Heart right ventricle (tissue), 16 donors: ENCODE measurements at regions of chr2 and their contacts with region 1.

Region 1: DNA sequence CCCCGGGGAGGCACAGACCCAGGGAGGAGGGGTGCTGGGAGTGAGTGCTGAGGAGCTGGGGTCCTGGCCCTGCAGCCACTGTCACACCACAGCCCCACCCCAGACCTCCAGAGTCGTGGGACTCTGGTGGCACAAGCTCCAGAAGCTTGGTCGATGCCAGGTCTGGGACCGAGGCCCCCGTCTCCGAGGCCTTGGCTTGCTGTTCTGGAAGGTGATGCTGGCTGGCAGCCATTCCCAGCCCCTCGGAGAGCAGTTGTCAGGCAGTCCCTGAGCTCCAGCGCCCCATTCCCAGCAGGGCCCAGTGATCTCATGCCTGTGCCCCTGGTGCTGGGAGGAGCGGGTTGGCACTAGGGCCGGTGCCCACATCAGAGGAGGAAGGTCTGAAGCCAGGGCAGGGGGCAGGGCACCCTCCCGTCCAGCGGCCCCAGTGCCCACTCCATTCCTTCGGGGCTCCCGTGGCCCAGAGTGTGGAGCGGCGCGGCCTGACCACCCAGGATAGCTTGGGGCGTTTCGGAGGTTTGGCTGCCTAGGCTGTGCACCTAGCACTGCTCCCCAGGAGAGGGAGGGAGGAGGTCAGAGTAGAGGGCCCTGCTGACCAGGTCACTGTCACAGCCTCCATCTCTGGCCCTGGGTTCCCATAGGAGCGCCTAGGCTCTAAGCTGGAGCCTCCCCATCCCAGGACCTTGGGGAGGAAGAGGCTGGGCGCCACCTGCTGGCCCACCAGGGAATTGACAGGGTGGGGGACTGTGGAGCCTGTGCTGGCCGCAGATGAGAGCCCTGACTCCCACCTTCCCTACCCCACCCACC is 16.8 kb upstream of the ALPI start:
- DNase-seq: no peak
- ATAC-seq: peak in 7 of 8 donors; percentile 34 to 67 (median 51)
- H3K4me3 ChIP-seq: no peak overlapping the region
- H3K27ac ChIP-seq: no peak overlapping the region
- H3K4me1 ChIP-seq: peaks cover 0 to 11% (median 0%) of the 10 kb centered on the region in 9 donors
- H3K27me3 ChIP-seq: peaks cover 0 to 12% (median 4%) of the 10 kb centered on the region in 7 donors
- CTCF ChIP-seq: peak; percentile 25 to 68 (median 59)

Region 2: GRCh38 chr2:231907787-231908186 is 531.4 kb before region 1 on chr2:
- intact Hi-C with region 1: loop called in 9 of 10 experiments (anchors 1 to 5 kb)
- DNase-seq: no peak
- ATAC-seq: no peak
- H3K4me3 ChIP-seq: no peak overlapping the region
- H3K27ac ChIP-seq: no peak overlapping the region
- H3K4me1 ChIP-seq: no peaks in the 10 kb centered on the region
- H3K27me3 ChIP-seq: peaks cover 0 to 10% (median 4%) of the 10 kb centered on the region in 7 donors
- CTCF ChIP-seq: no peak

Region 3: GRCh38 chr2:231925303-231926179 is 513.6 kb before region 1 on chr2:
- intact Hi-C with region 1: loop called in 1 of 10 experiments (anchors 5 kb)
- DNase-seq: peak; percentile 84 to 87
- ATAC-seq: peak; percentile 80 to 95 (median 90)
- H3K4me3 ChIP-seq: peak overlapping the region; percentile 30 to 59 (median 54)
- H3K27ac ChIP-seq: peak overlapping the region in 1 of 10 donors; percentile 15
- H3K4me1 ChIP-seq: peaks cover 8 to 38% (median 23%) of the 10 kb centered on the region in 9 donors
- H3K27me3 ChIP-seq: peaks cover 14 to 94% (median 80%) of the 10 kb centered on the region in 7 donors
- CTCF ChIP-seq: peak; percentile 85 to 97 (median 94)

Region 4: GRCh38 chr2:232075080-232075479 is 364.1 kb before region 1 on chr2:
- intact Hi-C with region 1: no loop called
- DNase-seq: no peak
- ATAC-seq: peak in 1 of 8 donors; percentile 88
- H3K4me3 ChIP-seq: no peak overlapping the region
- H3K27ac ChIP-seq: no peak overlapping the region
- H3K4me1 ChIP-seq: peaks cover 0 to 25% (median 15%) of the 10 kb centered on the region in 9 donors
- H3K27me3 ChIP-seq: no peaks in the 10 kb centered on the region
- CTCF ChIP-seq: no peak

Region 5: GRCh38 chr2:232333361-232334270 is 105.5 kb before region 1 on chr2:
- intact Hi-C with region 1: loop called in 2 of 10 experiments (anchors 10 kb)
- DNase-seq: no peak
- ATAC-seq: no peak
- H3K4me3 ChIP-seq: no peak overlapping the region
- H3K27ac ChIP-seq: no peak overlapping the region
- H3K4me1 ChIP-seq: peaks cover 0 to 6% (median 0%) of the 10 kb centered on the region in 9 donors
- H3K27me3 ChIP-seq: no peaks in the 10 kb centered on the region
- CTCF ChIP-seq: peak in 5 of 9 donors; percentile 17 to 37 (median 27)

Region 6: DNA sequence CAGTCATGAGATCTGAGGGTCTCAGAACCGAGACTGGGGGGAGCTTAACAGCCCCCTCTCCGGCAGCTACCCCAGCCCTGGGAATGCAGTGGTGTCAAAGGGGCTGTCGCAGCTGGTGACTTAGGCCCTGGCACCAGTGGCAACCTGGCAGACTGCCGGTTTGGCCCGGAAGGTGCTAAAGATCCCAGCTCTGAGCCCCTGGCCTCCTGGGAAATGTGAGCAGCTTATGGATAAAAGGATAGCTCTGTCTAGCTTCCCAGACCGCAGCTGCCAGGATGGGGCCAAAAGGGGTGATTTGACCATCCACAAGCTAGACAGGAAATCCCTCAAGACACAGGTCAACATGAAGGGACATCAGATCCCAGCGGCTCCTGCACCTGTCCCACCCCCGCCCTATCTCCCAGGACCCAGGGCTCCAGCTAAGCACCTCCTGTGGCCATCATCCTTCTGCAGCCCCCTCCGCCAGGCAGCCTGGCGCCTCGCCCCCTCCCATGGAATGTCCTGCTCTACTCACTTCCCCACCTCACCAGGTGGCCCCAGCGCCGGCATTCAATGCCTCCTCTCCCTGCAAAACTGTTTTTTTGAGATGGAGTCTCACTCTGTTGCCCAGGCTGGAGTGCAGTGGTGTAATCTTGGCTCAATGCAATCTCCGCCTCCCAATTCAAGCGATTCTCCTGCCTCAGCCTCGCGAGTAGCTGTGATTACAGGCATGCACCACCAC is 161.1 kb after region 1 on chr2:
- intact Hi-C with region 1: no loop called
- DNase-seq: no peak
- ATAC-seq: no peak
- H3K4me3 ChIP-seq: no peak overlapping the region
- H3K27ac ChIP-seq: no peak overlapping the region
- H3K4me1 ChIP-seq: no peaks in the 10 kb centered on the region
- H3K27me3 ChIP-seq: no peaks in the 10 kb centered on the region
- CTCF ChIP-seq: no peak